ENCODE measurements at regions of chr6 and their contacts with region 1.

Region 1: GRCh38 chr6:28225056-28225834 is at the start of gene ZSCAN9:
- DNase-seq: peak; percentile 91
- H3K4me3 ChIP-seq: peak within 1 kb of the TSS; percentile 57 to 76 (median 66)
- H3K27ac ChIP-seq: peak within 1 kb of the TSS; percentile 62
- H3K4me1 ChIP-seq: peaks cover 9% of the 10 kb centered on the region
- H3K27me3 ChIP-seq: no peaks in the 10 kb centered on the region
- CTCF ChIP-seq: no peak
- total RNA-seq, gene ZSCAN9: 11.9 to 15.5 TPM

Region 2: DNA sequence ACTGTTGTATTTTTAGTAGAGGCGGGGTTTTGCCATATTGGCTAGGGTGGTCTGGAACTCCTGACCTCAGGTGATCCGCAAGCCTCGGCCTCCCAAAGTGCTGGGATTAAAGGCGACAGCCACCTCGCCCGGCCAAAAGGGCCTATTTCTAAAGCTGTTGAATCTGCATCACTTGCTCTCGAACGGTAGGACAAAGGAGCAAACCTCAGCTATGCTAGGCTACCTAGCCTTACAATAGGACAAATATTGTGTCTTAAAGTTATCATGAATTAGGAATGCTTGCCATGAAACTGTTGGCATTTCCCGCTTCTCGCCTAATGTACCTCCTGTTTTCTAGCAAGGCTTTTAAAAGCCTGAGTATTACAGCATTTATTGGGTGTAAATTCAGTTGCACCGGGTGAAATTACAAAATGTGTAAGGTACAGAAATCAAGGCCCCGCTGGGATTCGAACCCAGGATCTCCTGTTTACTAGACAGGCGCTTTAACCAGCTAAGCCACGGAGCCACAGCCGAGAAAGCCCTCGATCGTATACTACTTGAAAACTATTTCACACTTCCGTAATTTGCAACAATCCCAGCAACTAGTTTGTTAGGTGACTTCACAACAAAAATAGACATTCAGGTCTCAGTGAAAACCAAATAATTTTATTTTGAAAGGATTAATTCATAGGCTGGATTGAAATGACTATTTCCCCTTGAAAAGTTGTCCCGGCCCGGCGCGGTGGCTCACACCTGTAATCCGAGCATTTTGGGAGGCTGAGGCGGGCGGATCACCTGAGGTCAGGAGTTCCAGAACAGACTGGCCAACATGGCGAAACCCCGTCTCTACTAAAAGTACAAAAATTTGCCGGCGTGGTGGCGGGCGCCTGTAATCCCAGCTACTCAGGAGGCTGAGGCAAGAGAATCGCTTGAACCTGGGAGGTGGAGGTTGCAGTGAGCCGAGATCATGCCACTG is 540.7 kb before region 1 on chr6:
- CTCF ChIA-PET with region 1: no interaction called
- dilution Hi-C with region 1: no loop called
- in situ Hi-C with region 1: no loop called
- intact Hi-C with region 1: no loop called
- DNase-seq: peak; percentile 92
- H3K4me3 ChIP-seq: no peak overlapping the region
- H3K27ac ChIP-seq: no peak overlapping the region
- H3K4me1 ChIP-seq: peaks cover 5% of the 10 kb centered on the region
- H3K27me3 ChIP-seq: peaks cover 2% of the 10 kb centered on the region
- CTCF ChIP-seq: no peak

Region 3: GRCh38 chr6:28266962-28267694 is 41.9 kb after region 1 on chr6 and contains the start of gene ZSCAN26:
- CTCF ChIA-PET with region 1: no interaction called
- dilution Hi-C with region 1: no loop called
- in situ Hi-C with region 1: no loop called
- intact Hi-C with region 1: loop called (anchors 5 kb)
- DNase-seq: peak; percentile 91
- H3K4me3 ChIP-seq: peak within 1 kb of the TSS; percentile 85 to 94 (median 91)
- H3K27ac ChIP-seq: peak within 1 kb of the TSS; percentile 70
- H3K4me1 ChIP-seq: peaks cover 22% of the 10 kb centered on the region
- H3K27me3 ChIP-seq: no peaks in the 10 kb centered on the region
- CTCF ChIP-seq: no peak
- total RNA-seq, gene ZSCAN26: 12.4 to 12.7 TPM

Region 4: DNA sequence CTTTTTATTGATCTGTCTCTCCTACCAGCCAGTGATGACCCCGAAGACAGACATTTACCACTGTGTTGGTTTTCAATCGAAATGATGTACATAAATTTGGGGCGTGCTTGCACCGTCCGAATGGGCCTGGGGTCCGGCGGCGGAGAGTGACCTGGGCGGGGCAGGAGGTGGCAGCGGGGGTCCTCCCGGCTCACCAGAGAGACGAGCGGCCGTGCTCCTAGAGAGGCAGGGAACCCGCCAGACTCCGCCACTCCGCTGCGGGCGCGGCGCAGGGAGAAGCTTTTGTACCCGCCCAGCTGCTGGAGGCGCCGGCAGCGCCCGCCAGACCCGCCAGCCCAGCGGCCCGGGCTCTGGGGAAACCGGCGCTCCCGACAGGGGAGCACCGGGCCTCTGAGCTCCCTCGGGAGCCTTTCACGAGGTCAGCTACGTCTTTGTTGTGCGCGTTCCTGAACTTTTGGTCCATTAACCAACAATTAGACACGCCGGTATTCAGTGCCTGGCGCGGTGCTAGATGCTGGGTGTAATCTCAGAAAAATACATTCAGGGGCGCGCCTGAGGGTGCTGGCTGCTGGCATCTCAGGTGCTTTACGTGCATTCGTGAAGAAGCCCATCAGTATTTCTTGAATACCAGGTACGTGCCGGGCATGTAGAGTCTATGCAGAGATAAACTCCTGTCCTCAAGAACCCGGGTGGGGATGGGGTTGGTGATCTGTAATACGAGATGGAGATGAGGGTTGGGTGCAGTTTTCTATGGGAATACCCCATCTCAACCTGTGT is 56.2 kb after region 1 on chr6 and contains the start of gene PGBD1:
- CTCF ChIA-PET with region 1: no interaction called
- dilution Hi-C with region 1: no loop called
- in situ Hi-C with region 1: no loop called
- intact Hi-C with region 1: loop called (anchors 1 kb)
- DNase-seq: peak; percentile 61
- H3K4me3 ChIP-seq: peak within 1 kb of the TSS; percentile 70 to 93 (median 70)
- H3K27ac ChIP-seq: peak within 1 kb of the TSS; percentile 22
- H3K4me1 ChIP-seq: peaks cover 6% of the 10 kb centered on the region
- H3K27me3 ChIP-seq: no peaks in the 10 kb centered on the region
- CTCF ChIP-seq: no peak
- total RNA-seq, gene PGBD1: 5.7 to 7.7 TPM

Measured in mammary epithelial cell (primary cell).